Adrenal gland (tissue), 19 donors: ENCODE measurements at regions of chr2 and their contacts with region 1.

Region 1: DNA sequence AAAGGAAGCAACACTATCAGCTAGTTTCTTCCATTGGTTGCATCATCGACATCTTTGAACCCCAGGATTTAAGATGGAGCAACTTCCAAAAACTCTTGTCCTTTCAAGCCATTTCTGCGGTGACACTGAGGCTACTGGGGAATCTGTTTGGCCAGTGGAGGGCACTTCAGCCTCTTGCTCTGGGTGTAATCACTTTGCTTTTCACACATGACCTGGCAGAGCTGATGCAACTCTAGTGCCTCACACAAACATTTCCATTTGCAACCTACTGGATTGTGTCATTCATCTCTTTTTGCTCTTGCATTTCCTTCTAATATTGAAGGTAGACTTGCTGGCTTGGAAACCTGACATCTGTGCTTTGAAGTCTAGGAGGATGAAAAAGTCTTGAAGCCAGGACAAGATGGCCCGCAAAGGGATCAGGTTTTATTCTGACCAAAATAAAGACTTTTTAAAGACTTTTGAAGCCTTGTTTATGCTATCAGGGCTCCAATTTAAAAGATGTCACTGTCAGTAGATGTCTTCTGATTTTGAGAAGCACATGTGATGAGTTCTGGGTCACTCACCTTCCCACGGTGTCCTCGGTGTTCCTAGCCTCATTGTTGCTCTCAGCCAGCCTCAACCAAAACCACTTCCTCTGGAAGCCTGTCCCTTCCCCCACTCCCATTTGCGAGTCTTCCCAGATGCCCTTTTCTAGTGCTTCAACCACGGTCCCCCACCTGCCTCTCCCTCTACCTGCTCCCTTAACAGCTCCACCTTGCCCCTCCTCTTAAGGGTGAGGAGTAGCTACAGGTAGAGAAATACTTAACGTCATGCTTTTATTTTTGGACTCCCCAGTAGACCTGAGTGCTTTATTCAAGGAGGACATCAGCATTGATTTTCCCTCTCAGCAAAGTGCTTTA is 69.7 kb upstream of the KCNE4 start:
- DNase-seq: peak; percentile 24 to 86 (median 48)
- H3K4me3 ChIP-seq: no peak overlapping the region
- H3K27ac ChIP-seq: peak overlapping the region in 1 of 5 donors; percentile 32
- H3K4me1 ChIP-seq: no peaks in the 10 kb centered on the region
- H3K27me3 ChIP-seq: no peaks in the 10 kb centered on the region
- CTCF ChIP-seq: peak in 5 of 6 experiments; percentile 29 to 57 (median 41)
- POLR2A ChIP-seq: no peak

Region 2: GRCh38 chr2:222076973-222077691 is 905.1 kb before region 1 on chr2:
- intact Hi-C with region 1: no loop called
- DNase-seq: no peak
- H3K4me3 ChIP-seq: no peak overlapping the region
- H3K27ac ChIP-seq: no peak overlapping the region
- H3K4me1 ChIP-seq: no peaks in the 10 kb centered on the region
- H3K27me3 ChIP-seq: peaks cover 6% of the 10 kb centered on the region
- CTCF ChIP-seq: no peak
- POLR2A ChIP-seq: no peak

Region 3: DNA sequence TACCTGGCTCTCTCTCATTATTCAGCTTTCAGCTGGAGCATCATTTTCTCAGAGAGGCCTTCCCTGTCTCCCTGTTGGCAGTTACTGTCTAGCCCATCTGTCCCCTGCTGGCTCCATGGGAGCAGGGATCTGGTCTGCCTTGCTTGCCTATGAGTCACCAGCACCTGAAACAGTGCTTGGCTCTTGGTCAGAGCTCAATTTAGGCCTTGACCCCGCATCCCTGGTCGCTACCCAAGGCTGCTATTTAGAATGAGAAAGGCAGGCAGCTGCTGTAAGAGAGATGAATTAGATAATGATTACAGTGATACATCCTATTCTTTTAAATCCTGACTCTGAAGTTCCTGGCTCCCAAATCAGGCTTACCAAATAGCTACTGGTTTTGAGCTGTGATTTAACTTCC is 102.6 kb after region 1 on chr2:
- intact Hi-C with region 1: loop called in 1 of 2 experiments (anchors 10 kb)
- DNase-seq: peak; percentile 45 to 87 (median 49)
- H3K4me3 ChIP-seq: no peak overlapping the region
- H3K27ac ChIP-seq: peak overlapping the region in 1 of 5 donors; percentile 48
- H3K4me1 ChIP-seq: no peaks in the 10 kb centered on the region
- H3K27me3 ChIP-seq: no peaks in the 10 kb centered on the region
- CTCF ChIP-seq: peak in 1 of 6 experiments; percentile 10
- POLR2A ChIP-seq: no peak